PC-3 (cell line): ENCODE measurements at regions of chr6 and their contacts with region 1.

Region 1: GRCh38 chr6:123802697-123803496 is 768 bp upstream of the NKAIN2 start:
- DNase-seq: peak; percentile 71
- ATAC-seq: peak; percentile 95
- H3K4me3 ChIP-seq: peak overlapping the region; percentile 52
- H3K27ac ChIP-seq: no peak overlapping the region
- H3K4me1 ChIP-seq: no peaks in the 10 kb centered on the region
- H3K27me3 ChIP-seq: peaks cover 31% of the 10 kb centered on the region
- CTCF ChIP-seq: peak; percentile 85

Region 2: DNA sequence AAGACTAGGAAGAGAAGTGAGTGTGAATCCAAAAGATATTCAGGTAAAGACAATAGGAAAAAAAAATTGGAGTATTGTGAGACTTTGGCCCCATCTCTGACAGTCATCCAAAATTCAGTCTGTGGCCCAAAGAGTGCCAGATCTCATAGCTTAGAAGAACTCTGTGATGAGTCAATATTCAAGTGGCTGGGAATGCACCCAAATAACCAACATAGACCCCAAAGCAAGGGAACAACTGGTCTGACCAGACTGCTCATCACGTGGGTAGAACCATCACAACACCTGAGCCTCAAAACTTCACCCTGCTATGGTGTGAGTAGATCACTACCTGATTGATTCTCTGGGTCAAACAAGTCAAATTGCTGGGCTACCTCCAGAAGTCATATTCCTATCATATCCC is 115.0 kb before region 1 on chr6:
- CTCF ChIA-PET with region 1: no interaction called
- POLR2A ChIA-PET with region 1: no interaction called
- intact Hi-C with region 1: no loop called
- DNase-seq: no peak
- ATAC-seq: no peak
- H3K4me3 ChIP-seq: no peak overlapping the region
- H3K27ac ChIP-seq: no peak overlapping the region
- H3K4me1 ChIP-seq: no peaks in the 10 kb centered on the region
- H3K27me3 ChIP-seq: no peaks in the 10 kb centered on the region
- CTCF ChIP-seq: no peak

Region 3: GRCh38 chr6:123829302-123829953 is 26.5 kb after region 1 on chr6:
- CTCF ChIA-PET with region 1: no interaction called
- POLR2A ChIA-PET with region 1: no interaction called
- intact Hi-C with region 1: no loop called
- DNase-seq: no peak
- ATAC-seq: no peak
- H3K4me3 ChIP-seq: no peak overlapping the region
- H3K27ac ChIP-seq: no peak overlapping the region
- H3K4me1 ChIP-seq: no peaks in the 10 kb centered on the region
- H3K27me3 ChIP-seq: no peaks in the 10 kb centered on the region
- CTCF ChIP-seq: no peak

Region 4: GRCh38 chr6:123909989-123910388 is 107.1 kb after region 1 on chr6:
- CTCF ChIA-PET with region 1: no interaction called
- POLR2A ChIA-PET with region 1: no interaction called
- intact Hi-C with region 1: no loop called
- DNase-seq: no peak
- ATAC-seq: no peak
- H3K4me3 ChIP-seq: no peak overlapping the region
- H3K27ac ChIP-seq: no peak overlapping the region
- H3K4me1 ChIP-seq: no peaks in the 10 kb centered on the region
- H3K27me3 ChIP-seq: no peaks in the 10 kb centered on the region
- CTCF ChIP-seq: no peak

Region 5: DNA sequence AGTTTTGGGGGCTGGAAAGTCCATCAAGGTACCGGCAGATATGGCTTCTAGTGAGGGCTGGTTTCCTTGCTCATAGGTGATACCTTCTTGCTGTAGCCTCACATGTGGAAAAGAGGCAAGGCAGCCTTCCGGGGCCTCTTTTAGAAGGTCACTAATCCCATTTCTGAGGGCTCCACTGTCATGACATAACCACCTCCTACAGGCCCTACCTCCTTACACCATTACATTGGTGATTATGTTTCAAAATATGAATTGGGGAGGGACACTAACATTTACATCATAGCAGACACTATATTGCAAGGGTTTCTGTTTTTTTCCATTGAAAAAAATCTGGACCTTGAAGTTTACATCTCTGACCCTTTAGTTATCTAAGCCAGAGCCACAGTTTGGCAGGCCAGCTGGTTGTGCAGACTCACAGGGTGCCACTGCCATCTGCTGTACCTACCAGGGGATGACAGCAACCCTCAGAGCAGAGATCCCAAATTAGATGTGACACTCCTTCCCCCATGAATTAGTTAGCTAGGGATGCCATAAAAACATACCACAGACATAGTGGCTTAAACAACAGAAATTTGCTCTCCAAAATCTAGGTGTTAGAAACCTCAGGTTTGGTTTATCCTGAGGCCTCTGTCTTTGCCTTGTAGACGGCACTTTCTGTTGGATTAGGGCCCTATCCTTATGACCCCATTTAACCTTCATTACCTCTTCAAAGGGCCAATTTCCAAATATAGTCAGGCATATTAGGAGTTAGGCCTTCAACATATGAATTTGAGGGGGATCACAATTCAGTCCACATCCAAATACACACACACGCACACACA is 993.0 kb after region 1 on chr6:
- CTCF ChIA-PET with region 1: no interaction called
- POLR2A ChIA-PET with region 1: no interaction called
- intact Hi-C with region 1: loop called (anchors 5 kb)
- DNase-seq: peak; percentile 18
- ATAC-seq: peak; percentile 48
- H3K4me3 ChIP-seq: no peak overlapping the region
- H3K27ac ChIP-seq: no peak overlapping the region
- H3K4me1 ChIP-seq: no peaks in the 10 kb centered on the region
- H3K27me3 ChIP-seq: peaks cover 27% of the 10 kb centered on the region
- CTCF ChIP-seq: peak; percentile 50